ENCODE measurements at regions of chr12 and their contacts with region 1.

Region 1: GRCh38 chr12:98894412-98895085 is 249.5 kb downstream of the APAF1 start:
- DNase-seq: peak in 3 of 5 donors; percentile 21 to 73 (median 39)
- H3K4me3 ChIP-seq: peak overlapping the region; percentile 30
- H3K27ac ChIP-seq: no peak overlapping the region
- H3K4me1 ChIP-seq: peaks cover 6% of the 10 kb centered on the region
- H3K27me3 ChIP-seq: no peaks in the 10 kb centered on the region
- CTCF ChIP-seq: no peak
- EP300 ChIP-seq: no peak
- POLR2A ChIP-seq: no peak

Region 2: DNA sequence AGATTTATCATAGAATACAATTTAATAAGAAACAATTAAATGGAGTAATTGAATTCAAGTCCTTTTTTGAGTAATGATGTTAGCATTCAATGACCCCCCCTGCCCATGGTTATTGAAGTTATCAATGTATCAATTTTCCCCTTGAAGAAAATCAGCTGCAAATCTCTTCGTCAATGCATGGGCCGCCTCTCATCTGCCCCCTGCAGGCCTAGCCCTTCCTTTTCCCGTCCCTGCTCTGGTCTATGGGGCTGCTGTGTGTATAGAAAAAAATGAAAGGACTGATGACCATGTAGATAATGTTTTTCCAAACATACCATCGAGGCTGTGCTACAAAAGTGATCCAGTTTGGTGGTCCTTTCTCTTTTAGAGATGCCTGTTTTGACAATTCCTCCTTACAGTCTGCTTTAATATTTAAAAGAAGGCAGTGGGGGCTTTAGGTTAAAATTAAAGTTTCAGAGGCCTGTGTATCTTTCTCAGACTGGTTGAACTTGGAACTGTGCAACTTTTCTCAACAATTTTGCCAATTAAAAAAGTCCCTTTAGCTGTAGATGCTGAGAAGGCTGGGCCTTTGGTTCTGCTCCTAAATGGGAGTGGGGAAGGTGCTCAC is 151.1 kb before region 1 on chr12:
- intact Hi-C with region 1: loop called in 1 of 4 experiments (anchors 10 kb)
- DNase-seq: no peak
- H3K4me3 ChIP-seq: no peak overlapping the region
- H3K27ac ChIP-seq: no peak overlapping the region
- H3K4me1 ChIP-seq: no peaks in the 10 kb centered on the region
- H3K27me3 ChIP-seq: no peaks in the 10 kb centered on the region
- CTCF ChIP-seq: no peak
- EP300 ChIP-seq: no peak
- POLR2A ChIP-seq: no peak

Region 3: DNA sequence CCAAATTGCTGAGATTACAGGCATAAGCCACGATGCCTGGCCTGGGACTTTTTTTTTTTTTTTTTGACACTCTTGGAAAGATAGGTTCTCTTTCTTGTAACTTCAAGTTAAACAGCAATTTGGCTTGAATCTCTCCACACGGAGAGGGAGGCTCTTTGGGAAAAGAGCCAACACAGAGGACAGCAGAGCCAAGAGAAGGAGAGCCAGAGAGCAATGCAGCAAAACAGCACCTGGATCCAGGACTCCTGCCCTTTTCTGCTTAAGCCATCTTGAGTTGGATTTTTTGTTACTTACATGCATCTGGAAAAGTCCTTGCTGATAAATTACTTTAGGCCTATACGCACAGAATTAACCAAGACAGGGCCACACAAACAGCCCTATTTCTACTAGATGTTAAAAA is 72.7 kb before region 1 on chr12:
- intact Hi-C with region 1: loop called in 1 of 4 experiments (anchors 10 kb)
- DNase-seq: peak; percentile 39 to 66 (median 46)
- H3K4me3 ChIP-seq: no peak overlapping the region
- H3K27ac ChIP-seq: no peak overlapping the region
- H3K4me1 ChIP-seq: peaks cover 4% of the 10 kb centered on the region
- H3K27me3 ChIP-seq: no peaks in the 10 kb centered on the region
- CTCF ChIP-seq: no peak
- EP300 ChIP-seq: no peak
- POLR2A ChIP-seq: no peak